HepG2 (cell line): ENCODE measurements at regions of chr2 and their contacts with region 1.

Region 1: DNA sequence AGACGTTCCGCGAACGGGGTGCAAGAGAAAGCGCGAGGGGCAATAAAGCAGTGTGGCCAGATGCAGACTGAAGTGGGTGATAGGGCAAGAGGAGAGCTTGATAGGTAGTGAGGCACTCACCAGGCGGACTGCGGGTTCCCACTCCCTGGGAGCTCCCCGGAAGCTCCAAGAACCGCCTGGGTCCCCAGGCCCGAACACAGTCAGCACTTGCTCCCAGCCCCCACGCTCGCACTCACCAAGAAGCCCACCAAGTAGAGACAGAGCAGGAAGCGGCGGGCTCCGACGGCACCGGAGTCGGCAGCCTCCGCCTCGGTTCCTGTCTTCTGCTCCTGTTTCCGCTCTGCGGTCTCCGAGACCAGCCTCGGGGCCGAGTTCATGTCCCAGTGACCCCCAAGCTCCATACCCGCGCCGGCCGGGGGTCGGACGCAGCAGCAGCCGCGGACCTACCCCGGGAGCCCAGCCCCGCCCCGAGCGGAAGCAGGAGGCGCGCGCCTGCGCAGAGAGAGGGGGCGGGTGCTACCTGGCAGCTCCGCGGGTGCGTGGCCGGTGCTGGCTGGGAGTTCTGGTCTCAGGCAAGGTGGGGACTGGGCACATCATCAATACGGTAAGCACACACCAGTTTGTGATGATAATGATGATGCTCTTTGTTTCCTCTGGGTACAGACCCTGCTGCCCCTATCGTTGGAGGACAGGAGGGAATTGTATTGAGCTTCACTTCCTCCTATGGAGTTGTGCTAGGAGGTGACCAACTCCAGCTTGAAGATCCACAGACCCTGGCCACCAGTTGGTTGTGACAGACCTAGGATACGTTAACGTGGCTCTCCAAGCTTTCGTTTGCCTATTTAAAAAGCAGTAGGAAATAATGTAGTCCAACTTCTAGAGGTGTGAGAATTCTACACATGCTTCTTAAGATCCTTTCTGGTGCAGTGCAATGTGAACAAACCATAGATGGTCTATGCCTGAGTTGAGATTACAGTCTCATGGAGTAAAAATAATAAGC is 25.1 kb upstream of the TMEM182 start:
- DNase-seq: peak; percentile 80
- ATAC-seq: peak; percentile 94
- H3K4me3 ChIP-seq: peak overlapping the region; percentile 95 to 99 (median 96)
- H3K27ac ChIP-seq: peak overlapping the region; percentile 83
- H3K4me1 ChIP-seq: peaks cover 40% of the 10 kb centered on the region
- H3K27me3 ChIP-seq: peaks cover 0 to 3% of the 10 kb centered on the region in 2 experiments; a peak in 1 of 5 replicates
- CTCF ChIP-seq: no peak
- EP300 ChIP-seq: no peak
- POLR2A ChIP-seq: peak; percentile 82 to 97
- RAD21 ChIP-seq: peak; percentile 18; the same call in 1 of the 2 replicates

Region 2: DNA sequence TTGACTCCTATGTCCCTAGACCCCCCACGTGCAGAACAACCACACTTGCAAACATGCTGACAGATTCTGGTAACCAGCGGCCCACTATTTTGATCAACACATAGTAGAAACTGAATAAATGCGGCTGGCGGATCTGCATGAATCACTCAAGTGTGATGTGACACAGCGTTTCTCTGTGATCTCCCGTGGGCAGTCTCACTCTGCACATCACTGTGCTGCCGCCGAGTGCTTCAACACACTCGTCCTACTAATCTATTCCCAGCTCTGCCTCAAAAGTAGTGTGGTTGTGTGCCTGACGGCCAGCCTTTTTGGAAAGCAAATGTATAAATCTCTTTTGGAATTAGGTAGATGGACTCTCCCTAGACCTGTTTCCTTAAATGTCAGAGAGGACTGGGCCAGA is 12.2 kb before region 1 on chr2:
- CTCF ChIA-PET with region 1: no interaction called
- POLR2A ChIA-PET with region 1: interaction called, 42 read pairs
- in situ Hi-C with region 1: no loop called
- intact Hi-C with region 1: no loop called
- DNase-seq: no peak
- ATAC-seq: peak; percentile 18
- H3K4me3 ChIP-seq: peak overlapping the region in 1 of 3 experiments; percentile 14; a peak in 1 of 6 replicates
- H3K27ac ChIP-seq: peak overlapping the region; percentile 70
- H3K4me1 ChIP-seq: peaks cover 65% of the 10 kb centered on the region
- H3K27me3 ChIP-seq: no peaks in the 10 kb centered on the region
- CTCF ChIP-seq: no peak
- EP300 ChIP-seq: no peak
- POLR2A ChIP-seq: no peak
- RAD21 ChIP-seq: no peak

Region 3: DNA sequence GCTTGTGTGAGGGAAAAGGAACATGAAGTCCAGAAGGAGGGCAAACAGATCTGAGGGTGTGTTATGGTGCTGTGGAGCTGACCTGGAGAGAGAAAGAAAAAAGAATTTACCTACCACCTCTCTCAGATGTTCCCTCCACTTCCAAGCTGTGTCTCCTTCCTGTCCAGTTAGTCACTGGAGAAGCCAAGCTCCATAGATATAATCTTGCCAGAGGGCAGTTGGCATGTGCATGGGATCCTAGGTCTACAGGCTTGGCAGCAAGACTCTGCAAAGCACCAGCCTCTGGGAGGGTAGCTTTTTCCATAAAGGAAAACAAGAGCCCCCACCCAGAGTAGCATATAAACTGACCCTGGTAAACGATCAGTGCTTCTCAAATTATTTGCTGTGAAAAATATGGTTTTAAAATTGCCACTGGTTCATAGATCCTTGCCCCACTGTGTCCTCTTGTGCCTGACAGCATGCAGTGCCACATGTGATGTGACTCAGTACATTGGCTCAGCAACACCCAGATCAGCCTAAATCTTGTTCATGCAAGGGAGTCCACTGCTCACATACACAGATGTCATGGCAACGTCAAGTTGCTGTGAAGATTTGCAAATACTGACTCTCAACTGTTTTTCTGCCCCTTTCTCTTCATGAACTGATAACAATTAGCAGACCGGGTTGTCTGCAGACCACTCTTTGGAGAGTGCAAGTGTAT is 116.0 kb after region 1 on chr2:
- CTCF ChIA-PET with region 1: no interaction called
- POLR2A ChIA-PET with region 1: no interaction called
- in situ Hi-C with region 1: no loop called
- intact Hi-C with region 1: no loop called
- DNase-seq: no peak
- ATAC-seq: no peak
- H3K4me3 ChIP-seq: no peak overlapping the region
- H3K27ac ChIP-seq: no peak overlapping the region
- H3K4me1 ChIP-seq: peaks cover 7% of the 10 kb centered on the region
- H3K27me3 ChIP-seq: no peaks in the 10 kb centered on the region
- CTCF ChIP-seq: no peak
- EP300 ChIP-seq: no peak
- POLR2A ChIP-seq: no peak
- RAD21 ChIP-seq: no peak